ENCODE measurements at regions of chr20 and their contacts with region 1.

Region 1: GRCh38 chr20:64024141-64024990 is 11.6 kb upstream of the C20orf204 start:
- DNase-seq: peak; percentile 100
- ATAC-seq: peak; percentile 90
- H3K4me3 ChIP-seq: peak overlapping the region in 2 of 3 experiments; percentile 18 to 63; a peak in 4 of 6 replicates
- H3K27ac ChIP-seq: peak overlapping the region; percentile 92
- H3K4me1 ChIP-seq: peaks cover 42% of the 10 kb centered on the region
- H3K27me3 ChIP-seq: no peaks in the 10 kb centered on the region
- CTCF ChIP-seq: peak; percentile 53
- EP300 ChIP-seq: peak; percentile 5 to 92; a peak in 3 of 4 replicates
- POLR2A ChIP-seq: peak; percentile 73 to 93
- RAD21 ChIP-seq: peak; percentile 72

Region 2: GRCh38 chr20:63908008-63908624 is 116.2 kb before region 1 on chr20:
- CTCF ChIA-PET with region 1: no interaction called
- POLR2A ChIA-PET with region 1: no interaction called
- in situ Hi-C with region 1: no loop called
- intact Hi-C with region 1: no loop called
- DNase-seq: peak; percentile 44
- ATAC-seq: peak; percentile 67
- H3K4me3 ChIP-seq: no peak overlapping the region
- H3K27ac ChIP-seq: no peak overlapping the region
- H3K4me1 ChIP-seq: peaks cover 33% of the 10 kb centered on the region
- H3K27me3 ChIP-seq: no peaks in the 10 kb centered on the region
- CTCF ChIP-seq: no peak
- EP300 ChIP-seq: no peak
- POLR2A ChIP-seq: no peak
- RAD21 ChIP-seq: no peak

Region 3: DNA sequence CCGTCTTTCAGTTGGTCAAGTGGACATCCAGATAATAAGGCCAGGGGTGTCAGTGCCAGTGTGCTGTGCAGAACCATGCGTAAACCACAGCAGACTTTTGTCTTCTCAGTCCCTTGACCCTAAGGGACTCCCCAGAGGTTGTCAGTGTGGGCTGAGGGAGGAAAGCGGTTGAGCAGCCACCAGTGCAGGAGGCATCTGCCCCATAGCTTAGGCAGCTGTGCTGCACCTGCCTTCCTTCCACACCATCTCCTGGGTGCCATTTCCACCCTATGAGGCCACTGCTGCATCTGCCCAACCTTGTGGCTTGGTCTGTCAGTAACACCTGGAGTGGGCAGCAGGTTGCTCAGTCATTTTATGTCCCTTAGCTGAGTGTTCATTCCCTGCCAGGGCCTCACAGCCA is 17.5 kb before region 1 on chr20:
- CTCF ChIA-PET with region 1: no interaction called
- POLR2A ChIA-PET with region 1: interaction called, 12 read pairs
- in situ Hi-C with region 1: no loop called
- intact Hi-C with region 1: no loop called
- DNase-seq: no peak
- ATAC-seq: peak; percentile 21; the same call in 1 of the 3 replicates
- H3K4me3 ChIP-seq: no peak overlapping the region
- H3K27ac ChIP-seq: no peak overlapping the region
- H3K4me1 ChIP-seq: no peaks in the 10 kb centered on the region
- H3K27me3 ChIP-seq: no peaks in the 10 kb centered on the region
- CTCF ChIP-seq: no peak
- EP300 ChIP-seq: no peak
- POLR2A ChIP-seq: no peak
- RAD21 ChIP-seq: no peak

Region 4: GRCh38 chr20:64038565-64039292 is 14.4 kb after region 1 on chr20:
- CTCF ChIA-PET with region 1: no interaction called
- POLR2A ChIA-PET with region 1: interaction called, 81 read pairs
- in situ Hi-C with region 1: no loop called
- intact Hi-C with region 1: loop called (anchors 1 kb)
- DNase-seq: no peak
- ATAC-seq: no peak
- H3K4me3 ChIP-seq: no peak overlapping the region
- H3K27ac ChIP-seq: peak overlapping the region; percentile 45
- H3K4me1 ChIP-seq: peaks cover 71% of the 10 kb centered on the region
- H3K27me3 ChIP-seq: no peaks in the 10 kb centered on the region
- CTCF ChIP-seq: peak; percentile 27; the same call in 1 of the 2 replicates
- EP300 ChIP-seq: no peak
- POLR2A ChIP-seq: no peak
- RAD21 ChIP-seq: no peak

Region 5: DNA sequence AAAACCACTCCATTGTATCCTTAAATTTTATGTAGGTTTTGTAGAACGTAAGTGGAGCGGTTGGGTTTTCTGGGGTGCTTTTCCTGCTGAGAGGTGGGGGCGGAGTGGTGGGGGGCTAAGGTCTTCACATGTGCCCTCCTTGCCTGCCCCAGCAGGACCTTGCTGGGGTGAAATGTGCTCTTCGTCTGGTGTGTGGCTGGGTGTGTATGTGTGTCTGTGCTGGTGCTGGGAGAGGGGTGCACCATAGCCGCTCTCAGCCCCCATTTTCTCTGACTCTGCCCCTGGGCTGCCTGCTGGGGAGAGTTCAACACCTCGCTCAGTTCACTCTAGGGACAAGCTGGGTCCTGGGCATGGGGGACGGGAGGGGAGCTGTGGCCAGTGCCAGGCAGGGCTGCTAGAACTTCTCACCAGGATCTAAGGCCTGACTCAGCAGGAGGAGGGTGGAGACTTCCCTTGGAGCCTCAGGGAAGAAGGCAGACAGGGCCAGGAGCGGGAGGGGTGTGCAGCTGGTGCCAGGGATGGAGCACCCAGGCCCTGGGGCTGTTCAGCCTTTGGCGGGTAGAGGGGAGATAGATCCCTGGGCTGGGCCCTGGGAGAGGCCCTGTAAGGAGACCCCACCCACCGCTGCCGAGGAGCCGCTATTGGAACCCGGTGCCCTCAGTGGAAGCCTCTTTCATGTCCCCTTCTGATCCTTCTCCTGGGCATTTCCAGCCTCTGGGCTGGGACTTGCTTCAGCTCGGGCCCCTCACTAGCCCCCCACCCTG is 20.3 kb after region 1 on chr20:
- CTCF ChIA-PET with region 1: no interaction called
- POLR2A ChIA-PET with region 1: interaction called, 39 read pairs
- in situ Hi-C with region 1: no loop called
- intact Hi-C with region 1: no loop called
- DNase-seq: no peak
- ATAC-seq: no peak; the same call in 2 of the 3 replicates
- H3K4me3 ChIP-seq: peak overlapping the region in 1 of 3 experiments; percentile 45; a peak in 1 of 6 replicates
- H3K27ac ChIP-seq: no peak overlapping the region
- H3K4me1 ChIP-seq: peaks cover 56% of the 10 kb centered on the region
- H3K27me3 ChIP-seq: no peaks in the 10 kb centered on the region
- CTCF ChIP-seq: no peak
- EP300 ChIP-seq: no peak
- POLR2A ChIP-seq: no peak
- RAD21 ChIP-seq: no peak

Region 6: DNA sequence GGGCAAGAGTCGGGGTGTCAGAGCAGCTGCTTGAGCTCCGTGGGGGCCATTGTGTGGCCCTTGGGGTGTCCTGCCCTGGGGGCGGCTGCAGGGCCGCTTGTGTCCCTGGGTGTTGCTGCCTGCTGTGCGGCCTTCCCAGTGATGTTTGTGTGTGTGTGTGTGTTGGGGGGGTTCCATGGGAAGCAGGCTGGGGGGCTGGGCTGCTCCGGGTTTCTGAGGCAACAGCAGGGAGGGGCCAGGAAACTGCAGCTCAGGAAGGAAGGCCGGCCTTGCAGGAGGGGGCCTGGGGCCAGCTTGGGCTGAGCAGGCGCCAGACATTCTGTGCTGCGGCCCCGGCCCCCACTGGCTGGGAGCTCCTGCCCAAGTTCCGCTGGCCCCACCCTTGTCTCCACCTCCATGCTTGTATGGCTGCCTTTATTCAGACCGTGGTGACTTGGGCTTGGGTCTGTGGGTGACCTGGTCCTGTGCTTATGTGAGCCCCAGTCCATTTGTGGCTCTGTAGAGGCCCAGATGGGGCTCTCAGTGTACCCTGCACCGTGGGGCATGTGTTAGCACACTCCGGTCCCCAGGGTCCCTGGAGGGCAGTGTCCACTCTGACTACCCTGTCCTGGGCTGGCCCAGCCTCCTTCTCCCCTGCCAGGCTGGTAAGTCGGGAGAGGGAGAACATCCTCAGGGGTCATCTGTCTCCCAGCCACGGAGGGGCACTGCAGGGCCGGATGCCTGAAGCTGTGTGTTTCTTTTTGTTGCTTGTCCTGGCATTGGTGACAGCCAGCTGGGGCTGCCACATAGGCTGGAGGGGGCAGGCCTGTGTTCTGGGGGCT is 29.7 kb after region 1 on chr20:
- CTCF ChIA-PET with region 1: no interaction called
- POLR2A ChIA-PET with region 1: interaction called, 26 read pairs
- in situ Hi-C with region 1: no loop called
- intact Hi-C with region 1: loop called (anchors 1 kb)
- DNase-seq: peak; percentile 94
- ATAC-seq: peak; percentile 41
- H3K4me3 ChIP-seq: peak overlapping the region; percentile 45 to 69 (median 46)
- H3K27ac ChIP-seq: peak overlapping the region; percentile 77
- H3K4me1 ChIP-seq: peaks cover 87% of the 10 kb centered on the region
- H3K27me3 ChIP-seq: no peaks in the 10 kb centered on the region; a peak in 1 of 5 replicates
- CTCF ChIP-seq: peak; percentile 91
- EP300 ChIP-seq: peak; percentile 49 to 61; a peak in 3 of 4 replicates
- POLR2A ChIP-seq: peak in 1 of 2 experiments; percentile 65; a peak in 2 of 4 replicates
- RAD21 ChIP-seq: peak; percentile 87

Region 7: GRCh38 chr20:64062596-64063388 is 38.4 kb after region 1 on chr20 and contains the start of gene TCEA2:
- CTCF ChIA-PET with region 1: no interaction called
- POLR2A ChIA-PET with region 1: interaction called, 10 read pairs
- in situ Hi-C with region 1: no loop called
- intact Hi-C with region 1: no loop called
- DNase-seq: peak; percentile 96
- ATAC-seq: peak; percentile 76
- H3K4me3 ChIP-seq: peak within 1 kb of the TSS; percentile 82 to 98 (median 90)
- H3K27ac ChIP-seq: peak within 1 kb of the TSS; percentile 78
- H3K4me1 ChIP-seq: peaks cover 65% of the 10 kb centered on the region
- H3K27me3 ChIP-seq: peaks cover 0 to 3% of the 10 kb centered on the region in 2 experiments; a peak in 2 of 5 replicates
- CTCF ChIP-seq: peak; percentile 32; the same call in 1 of the 2 replicates
- EP300 ChIP-seq: peak in 1 of 2 experiments; percentile 10; a peak in 1 of 4 replicates
- POLR2A ChIP-seq: peak in 1 of 2 experiments; percentile 81; a peak in 2 of 4 replicates
- RAD21 ChIP-seq: peak; percentile 40; the same call in 1 of the 2 replicates
- total RNA-seq, gene TCEA2: 25.9 and 33.7 TPM in 2 replicates